ENCODE measurements at regions of chrX and their contacts with region 1.

Region 1: GRCh38 chrX:118726887-118727739 is at the start of gene IL13RA1:
- DNase-seq: peak; percentile 93
- ATAC-seq: peak; percentile 91
- H3K4me3 ChIP-seq: peak within 1 kb of the TSS; percentile 65 to 74 (median 74)
- H3K27ac ChIP-seq: peak within 1 kb of the TSS; percentile 99
- H3K4me1 ChIP-seq: peaks cover 63% of the 10 kb centered on the region
- H3K27me3 ChIP-seq: no peaks in the 10 kb centered on the region
- CTCF ChIP-seq: peak; percentile 14; the same call in 1 of the 2 replicates
- EP300 ChIP-seq: peak in 1 of 2 experiments; percentile 64; a peak in 3 of 4 replicates
- POLR2A ChIP-seq: peak; percentile 51 to 80
- RAD21 ChIP-seq: peak; percentile 31; the same call in 1 of the 2 replicates
- total RNA-seq, gene IL13RA1: 31.3 and 56.6 TPM in 2 replicates

Region 2: DNA sequence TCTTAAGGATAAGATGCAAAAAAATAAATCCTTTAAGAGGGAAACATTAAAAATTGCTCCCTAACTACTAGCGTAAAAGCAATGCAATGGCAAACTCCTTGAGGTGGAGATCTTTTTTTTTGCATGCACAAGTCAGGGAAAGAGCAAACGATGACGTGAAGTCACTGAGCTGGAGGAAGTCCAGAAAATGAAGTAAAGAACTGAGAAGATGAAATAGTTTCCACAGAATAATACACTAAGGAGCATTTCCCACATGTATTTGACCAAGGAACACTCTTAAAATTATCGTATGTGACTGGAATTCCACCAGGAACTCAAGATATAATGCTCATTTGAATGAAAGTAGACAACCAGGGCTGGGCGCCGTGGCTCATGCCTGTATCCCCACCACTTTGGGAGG is 252.5 kb before region 1 on chrX:
- CTCF ChIA-PET with region 1: no interaction called
- POLR2A ChIA-PET with region 1: no interaction called
- in situ Hi-C with region 1: no loop called
- intact Hi-C with region 1: no loop called
- DNase-seq: no peak
- ATAC-seq: no peak
- H3K4me3 ChIP-seq: no peak overlapping the region
- H3K27ac ChIP-seq: no peak overlapping the region
- H3K4me1 ChIP-seq: no peaks in the 10 kb centered on the region
- H3K27me3 ChIP-seq: no peaks in the 10 kb centered on the region
- CTCF ChIP-seq: no peak
- EP300 ChIP-seq: no peak
- POLR2A ChIP-seq: no peak
- RAD21 ChIP-seq: no peak

Region 3: GRCh38 chrX:118644378-118644777 is 82.7 kb before region 1 on chrX:
- CTCF ChIA-PET with region 1: no interaction called
- POLR2A ChIA-PET with region 1: interaction called, 4 read pairs
- in situ Hi-C with region 1: no loop called
- intact Hi-C with region 1: loop called (anchors 5 kb)
- DNase-seq: peak; percentile 54
- ATAC-seq: peak; percentile 87
- H3K4me3 ChIP-seq: no peak overlapping the region
- H3K27ac ChIP-seq: no peak overlapping the region
- H3K4me1 ChIP-seq: no peaks in the 10 kb centered on the region
- H3K27me3 ChIP-seq: no peaks in the 10 kb centered on the region
- CTCF ChIP-seq: peak; percentile 58
- EP300 ChIP-seq: no peak
- POLR2A ChIP-seq: no peak
- RAD21 ChIP-seq: peak; percentile 50; the same call in 1 of the 2 replicates

Region 4: DNA sequence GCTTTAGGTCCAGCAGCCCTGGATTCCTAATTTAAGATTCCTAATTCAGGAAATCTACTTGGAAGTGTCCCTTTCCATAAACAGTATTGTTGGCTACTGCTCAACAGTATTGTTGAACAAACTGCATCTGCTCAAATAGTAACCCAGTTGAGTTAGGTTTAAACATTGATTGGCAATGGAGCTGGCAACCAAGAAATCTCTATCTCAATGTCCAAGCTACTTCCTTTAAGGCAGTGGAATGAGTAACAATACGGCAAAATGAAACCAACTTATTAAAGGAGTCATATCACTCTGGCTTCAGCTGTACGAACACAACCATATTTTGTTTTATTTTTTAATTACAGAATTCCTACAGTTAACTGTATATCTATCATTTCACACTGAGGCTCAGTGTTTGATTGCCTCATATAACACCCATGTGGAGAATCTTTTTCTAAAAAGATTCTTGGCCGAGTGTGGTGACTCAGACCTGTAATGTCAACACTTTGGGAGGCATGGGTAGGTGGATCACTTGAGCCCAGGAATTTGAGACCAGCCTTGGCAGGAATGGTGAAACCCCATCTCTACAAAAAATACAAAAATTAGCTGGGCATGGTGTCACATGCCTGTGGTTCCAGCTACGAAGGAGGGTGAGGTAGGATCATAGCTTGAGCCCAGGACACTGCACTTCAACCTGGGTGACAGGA is 71.4 kb before region 1 on chrX:
- CTCF ChIA-PET with region 1: no interaction called
- POLR2A ChIA-PET with region 1: no interaction called
- in situ Hi-C with region 1: no loop called
- intact Hi-C with region 1: loop called (anchors 2 kb)
- DNase-seq: peak; percentile 2
- ATAC-seq: no peak
- H3K4me3 ChIP-seq: no peak overlapping the region
- H3K27ac ChIP-seq: no peak overlapping the region
- H3K4me1 ChIP-seq: no peaks in the 10 kb centered on the region
- H3K27me3 ChIP-seq: no peaks in the 10 kb centered on the region
- CTCF ChIP-seq: no peak
- EP300 ChIP-seq: no peak
- POLR2A ChIP-seq: no peak
- RAD21 ChIP-seq: no peak

Region 5: GRCh38 chrX:118702741-118703140 is 24.4 kb before region 1 on chrX:
- CTCF ChIA-PET with region 1: no interaction called
- POLR2A ChIA-PET with region 1: no interaction called
- in situ Hi-C with region 1: no loop called
- intact Hi-C with region 1: loop called (anchors 2 kb)
- DNase-seq: peak; percentile 73
- ATAC-seq: peak; percentile 63
- H3K4me3 ChIP-seq: no peak overlapping the region
- H3K27ac ChIP-seq: no peak overlapping the region
- H3K4me1 ChIP-seq: peaks cover 11% of the 10 kb centered on the region
- H3K27me3 ChIP-seq: no peaks in the 10 kb centered on the region
- CTCF ChIP-seq: no peak
- EP300 ChIP-seq: no peak
- POLR2A ChIP-seq: no peak
- RAD21 ChIP-seq: no peak

Region 6: GRCh38 chrX:118780911-118781310 is 53.8 kb after region 1 on chrX:
- CTCF ChIA-PET with region 1: no interaction called
- POLR2A ChIA-PET with region 1: no interaction called
- in situ Hi-C with region 1: no loop called
- intact Hi-C with region 1: no loop called
- DNase-seq: no peak
- ATAC-seq: no peak
- H3K4me3 ChIP-seq: no peak overlapping the region
- H3K27ac ChIP-seq: no peak overlapping the region
- H3K4me1 ChIP-seq: no peaks in the 10 kb centered on the region
- H3K27me3 ChIP-seq: no peaks in the 10 kb centered on the region
- CTCF ChIP-seq: no peak
- EP300 ChIP-seq: no peak
- POLR2A ChIP-seq: no peak
- RAD21 ChIP-seq: no peak

Region 7: GRCh38 chrX:118847676-118848075 is 120.6 kb after region 1 on chrX:
- CTCF ChIA-PET with region 1: no interaction called
- POLR2A ChIA-PET with region 1: no interaction called
- in situ Hi-C with region 1: no loop called
- intact Hi-C with region 1: no loop called
- DNase-seq: peak; percentile 34
- ATAC-seq: no peak
- H3K4me3 ChIP-seq: no peak overlapping the region
- H3K27ac ChIP-seq: no peak overlapping the region
- H3K4me1 ChIP-seq: no peaks in the 10 kb centered on the region
- H3K27me3 ChIP-seq: no peaks in the 10 kb centered on the region
- CTCF ChIP-seq: peak; percentile 60
- EP300 ChIP-seq: no peak
- POLR2A ChIP-seq: no peak
- RAD21 ChIP-seq: no peak

Region 8: GRCh38 chrX:119105826-119106225 is 378.7 kb after region 1 on chrX:
- CTCF ChIA-PET with region 1: no interaction called
- POLR2A ChIA-PET with region 1: no interaction called
- in situ Hi-C with region 1: no loop called
- intact Hi-C with region 1: no loop called
- DNase-seq: no peak
- ATAC-seq: no peak
- H3K4me3 ChIP-seq: no peak overlapping the region
- H3K27ac ChIP-seq: no peak overlapping the region
- H3K4me1 ChIP-seq: no peaks in the 10 kb centered on the region
- H3K27me3 ChIP-seq: no peaks in the 10 kb centered on the region
- CTCF ChIP-seq: no peak
- EP300 ChIP-seq: no peak
- POLR2A ChIP-seq: no peak
- RAD21 ChIP-seq: no peak

Region 9: DNA sequence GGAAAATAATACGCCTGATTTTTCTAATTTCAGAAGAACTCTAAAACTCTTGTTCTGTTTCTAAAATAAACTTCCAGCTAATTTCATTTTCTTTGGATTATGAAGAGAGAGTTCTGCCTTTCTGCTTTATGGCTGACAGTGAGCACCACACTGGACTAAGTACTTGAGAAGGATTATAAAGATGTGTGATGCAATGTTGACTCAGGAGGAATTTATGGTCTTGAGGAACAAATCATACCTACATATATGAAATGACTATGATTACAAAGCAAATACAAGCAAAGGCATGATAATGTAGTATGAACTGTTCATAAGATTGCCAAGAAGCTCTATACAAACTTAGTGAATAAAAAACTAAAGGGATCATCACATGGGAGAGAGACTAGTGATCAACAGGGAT is 728.2 kb after region 1 on chrX:
- CTCF ChIA-PET with region 1: no interaction called
- POLR2A ChIA-PET with region 1: no interaction called
- in situ Hi-C with region 1: no loop called
- intact Hi-C with region 1: loop called (anchors 5 kb)
- DNase-seq: no peak
- ATAC-seq: no peak
- H3K4me3 ChIP-seq: no peak overlapping the region
- H3K27ac ChIP-seq: no peak overlapping the region
- H3K4me1 ChIP-seq: peaks cover 11% of the 10 kb centered on the region
- H3K27me3 ChIP-seq: no peaks in the 10 kb centered on the region
- CTCF ChIP-seq: no peak
- EP300 ChIP-seq: no peak
- POLR2A ChIP-seq: no peak
- RAD21 ChIP-seq: no peak

Measured in HepG2 (cell line).